ENCODE measurements at regions of chr6 and their contacts with region 1.

Region 1: DNA sequence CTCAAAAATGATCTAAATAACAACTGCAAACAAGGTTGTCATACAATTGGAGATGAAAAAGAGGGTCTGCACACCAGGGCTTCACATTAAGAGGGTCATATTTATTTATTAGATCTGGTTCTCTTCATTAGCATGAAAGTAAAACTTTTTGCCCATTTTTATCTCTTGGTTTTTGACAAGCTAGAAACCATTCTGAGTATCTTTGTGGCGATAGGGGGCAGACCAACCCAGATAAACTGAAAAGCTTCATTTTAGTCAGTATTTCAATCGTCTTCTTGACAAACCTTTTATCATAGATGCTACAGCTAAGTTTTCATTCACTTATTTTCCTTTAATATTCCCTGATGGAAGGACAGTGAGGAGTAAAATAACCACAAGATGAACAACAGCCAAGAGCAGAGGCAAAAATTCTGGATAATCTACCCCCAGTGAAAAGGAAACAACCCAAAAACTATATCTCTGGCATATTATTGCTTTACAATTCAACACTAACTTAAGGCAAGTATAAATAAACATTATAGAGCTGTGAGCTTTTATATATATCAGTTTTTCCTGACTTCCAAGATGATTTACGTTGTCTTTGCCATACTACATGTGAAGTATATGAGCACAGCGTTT is 45.2 kb downstream of the THEMIS start:
- DNase-seq: peak in 8 of 9 experiments; percentile 25 to 79 (median 62)
- ATAC-seq: peak; percentile 65
- H3K4me3 ChIP-seq: no peak overlapping the region
- H3K4me3 Mint-ChIP-seq: peak overlapping the region; percentile 19
- H3K27ac ChIP-seq: peak overlapping the region in 1 of 2 experiments; percentile 36
- H3K27ac Mint-ChIP-seq: peak overlapping the region; percentile 72
- H3K4me1 ChIP-seq: peaks cover 63% of the 10 kb centered on the region
- H3K4me1 Mint-ChIP-seq: peaks cover 83% of the 10 kb centered on the region
- H3K27me3 ChIP-seq: no peaks in the 10 kb centered on the region
- H3K27me3 Mint-ChIP-seq: no peaks in the 10 kb centered on the region
- CTCF ChIP-seq: peak; percentile 69

Region 2: DNA sequence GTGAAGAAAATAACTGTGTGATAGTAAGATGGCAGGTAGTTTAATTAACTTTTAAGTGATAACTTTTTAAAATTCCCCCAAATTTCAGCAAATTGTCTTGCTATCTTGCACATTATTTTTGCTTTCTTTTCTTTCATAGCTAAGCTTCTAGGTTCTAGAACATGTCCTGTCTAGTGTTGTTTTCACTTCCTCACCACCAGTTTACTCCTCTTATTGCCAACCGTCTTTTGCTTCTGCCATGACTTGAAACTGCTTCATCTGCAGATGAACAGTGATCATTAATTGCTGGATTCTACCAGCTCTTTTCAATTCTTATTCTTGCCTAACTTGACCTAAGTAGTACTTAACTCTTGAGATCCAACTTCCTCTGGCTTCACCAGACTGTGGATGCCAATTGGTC is 1378.0 kb before region 1 on chr6:
- CTCF ChIA-PET with region 1: no interaction called
- POLR2A ChIA-PET with region 1: no interaction called
- intact Hi-C with region 1: no loop called
- DNase-seq: no peak
- ATAC-seq: no peak
- H3K4me3 ChIP-seq: no peak overlapping the region
- H3K4me3 Mint-ChIP-seq: no peak overlapping the region
- H3K27ac ChIP-seq: no peak overlapping the region
- H3K27ac Mint-ChIP-seq: no peak overlapping the region
- H3K4me1 ChIP-seq: no peaks in the 10 kb centered on the region
- H3K4me1 Mint-ChIP-seq: no peaks in the 10 kb centered on the region
- H3K27me3 ChIP-seq: no peaks in the 10 kb centered on the region
- H3K27me3 Mint-ChIP-seq: no peaks in the 10 kb centered on the region
- CTCF ChIP-seq: no peak

Region 3: DNA sequence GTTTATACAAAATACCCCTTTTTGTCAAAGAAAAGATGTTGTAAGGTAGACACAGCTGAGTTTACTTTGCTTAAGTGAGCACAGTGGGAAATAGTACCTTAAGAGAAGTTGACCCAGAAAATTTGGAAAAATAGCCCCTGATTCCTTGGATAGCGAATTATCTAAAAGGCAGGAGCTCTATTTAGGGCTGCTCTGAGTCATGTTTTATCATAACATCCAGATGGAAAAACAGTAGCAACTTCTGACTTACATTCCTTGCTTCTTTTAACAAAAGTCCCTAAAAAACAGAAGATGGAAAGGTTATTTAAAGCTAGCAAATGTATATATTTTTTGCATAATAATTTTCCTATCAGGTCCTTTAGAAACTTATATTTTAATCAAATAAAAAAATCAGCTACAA is 13.8 kb before region 1 on chr6:
- CTCF ChIA-PET with region 1: interaction called, 19 read pairs
- POLR2A ChIA-PET with region 1: no interaction called
- intact Hi-C with region 1: loop called in 1 of 2 experiments (anchors 1 kb)
- DNase-seq: no peak
- ATAC-seq: no peak
- H3K4me3 ChIP-seq: no peak overlapping the region
- H3K4me3 Mint-ChIP-seq: no peak overlapping the region
- H3K27ac ChIP-seq: no peak overlapping the region
- H3K27ac Mint-ChIP-seq: peak overlapping the region; percentile 37
- H3K4me1 ChIP-seq: peaks cover 19% of the 10 kb centered on the region
- H3K4me1 Mint-ChIP-seq: peaks cover 73% of the 10 kb centered on the region
- H3K27me3 ChIP-seq: no peaks in the 10 kb centered on the region
- H3K27me3 Mint-ChIP-seq: no peaks in the 10 kb centered on the region
- CTCF ChIP-seq: no peak

Region 4: GRCh38 chr6:127907960-127908640 is 52.4 kb after region 1 on chr6:
- CTCF ChIA-PET with region 1: interaction called, 14 read pairs
- POLR2A ChIA-PET with region 1: no interaction called
- intact Hi-C with region 1: loop called in 1 of 2 experiments (anchors 2 kb)
- DNase-seq: peak in 2 of 9 experiments; percentile 48 to 66
- ATAC-seq: peak; percentile 69
- H3K4me3 ChIP-seq: peak overlapping the region; percentile 25 to 52
- H3K4me3 Mint-ChIP-seq: peak overlapping the region; percentile 80
- H3K27ac ChIP-seq: peak overlapping the region; percentile 42 to 88
- H3K27ac Mint-ChIP-seq: peak overlapping the region; percentile 88
- H3K4me1 ChIP-seq: peaks cover 24% of the 10 kb centered on the region
- H3K4me1 Mint-ChIP-seq: peaks cover 68% of the 10 kb centered on the region
- H3K27me3 ChIP-seq: no peaks in the 10 kb centered on the region
- H3K27me3 Mint-ChIP-seq: no peaks in the 10 kb centered on the region
- CTCF ChIP-seq: no peak

Region 5: DNA sequence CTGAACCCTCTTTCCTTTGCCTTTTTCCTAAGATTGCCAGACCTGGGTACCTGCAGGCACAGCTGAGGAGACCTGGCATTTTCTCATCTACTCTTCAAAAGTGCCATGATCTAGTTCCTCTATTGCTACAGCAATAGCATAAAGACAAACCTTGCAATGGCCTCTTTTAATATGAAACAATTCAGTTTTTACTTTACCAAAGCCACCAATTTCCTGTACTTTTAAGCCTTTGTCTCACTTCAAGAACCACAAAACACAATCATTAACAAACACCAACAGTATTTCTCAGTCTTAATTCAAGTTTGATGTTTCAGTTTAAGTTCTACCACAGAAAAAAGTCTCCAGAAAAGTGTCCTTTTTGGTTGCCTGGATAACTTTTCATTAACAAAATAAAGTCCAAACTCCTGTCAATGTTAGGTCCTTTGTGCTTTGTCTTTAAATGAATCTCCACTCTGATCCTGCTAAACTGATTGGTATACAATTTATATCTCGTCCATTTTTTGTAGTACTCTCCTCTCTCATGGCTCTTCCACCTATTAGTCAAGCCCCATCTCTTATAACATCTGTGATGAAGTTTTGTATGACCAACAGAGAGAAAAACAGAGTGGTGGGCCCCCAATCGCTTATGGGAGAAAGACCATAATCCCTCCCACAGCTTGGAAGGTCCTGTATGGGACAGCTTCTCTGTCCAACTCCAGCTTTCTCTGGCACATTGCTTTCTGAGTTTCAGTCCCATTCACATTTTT is 95.7 kb after region 1 on chr6:
- CTCF ChIA-PET with region 1: interaction called, 20 read pairs
- POLR2A ChIA-PET with region 1: no interaction called
- intact Hi-C with region 1: no loop called
- DNase-seq: peak in 2 of 9 experiments; percentile 55 to 76
- ATAC-seq: peak; percentile 83
- H3K4me3 ChIP-seq: peak overlapping the region; percentile 14 to 25
- H3K4me3 Mint-ChIP-seq: peak overlapping the region; percentile 68
- H3K27ac ChIP-seq: peak overlapping the region; percentile 40 to 63
- H3K27ac Mint-ChIP-seq: peak overlapping the region; percentile 92
- H3K4me1 ChIP-seq: peaks cover 58% of the 10 kb centered on the region
- H3K4me1 Mint-ChIP-seq: peaks cover 75% of the 10 kb centered on the region
- H3K27me3 ChIP-seq: no peaks in the 10 kb centered on the region
- H3K27me3 Mint-ChIP-seq: no peaks in the 10 kb centered on the region
- CTCF ChIP-seq: no peak

Region 6: GRCh38 chr6:128068116-128068479 is 212.4 kb after region 1 on chr6:
- CTCF ChIA-PET with region 1: interaction called, 5 read pairs
- POLR2A ChIA-PET with region 1: no interaction called
- intact Hi-C with region 1: loop called in 1 of 2 experiments (anchors 5 kb)
- DNase-seq: no peak
- ATAC-seq: no peak
- H3K4me3 ChIP-seq: no peak overlapping the region
- H3K4me3 Mint-ChIP-seq: no peak overlapping the region
- H3K27ac ChIP-seq: no peak overlapping the region
- H3K27ac Mint-ChIP-seq: no peak overlapping the region
- H3K4me1 ChIP-seq: no peaks in the 10 kb centered on the region
- H3K4me1 Mint-ChIP-seq: peaks cover 6% of the 10 kb centered on the region
- H3K27me3 ChIP-seq: no peaks in the 10 kb centered on the region
- H3K27me3 Mint-ChIP-seq: no peaks in the 10 kb centered on the region
- CTCF ChIP-seq: no peak

Region 7: DNA sequence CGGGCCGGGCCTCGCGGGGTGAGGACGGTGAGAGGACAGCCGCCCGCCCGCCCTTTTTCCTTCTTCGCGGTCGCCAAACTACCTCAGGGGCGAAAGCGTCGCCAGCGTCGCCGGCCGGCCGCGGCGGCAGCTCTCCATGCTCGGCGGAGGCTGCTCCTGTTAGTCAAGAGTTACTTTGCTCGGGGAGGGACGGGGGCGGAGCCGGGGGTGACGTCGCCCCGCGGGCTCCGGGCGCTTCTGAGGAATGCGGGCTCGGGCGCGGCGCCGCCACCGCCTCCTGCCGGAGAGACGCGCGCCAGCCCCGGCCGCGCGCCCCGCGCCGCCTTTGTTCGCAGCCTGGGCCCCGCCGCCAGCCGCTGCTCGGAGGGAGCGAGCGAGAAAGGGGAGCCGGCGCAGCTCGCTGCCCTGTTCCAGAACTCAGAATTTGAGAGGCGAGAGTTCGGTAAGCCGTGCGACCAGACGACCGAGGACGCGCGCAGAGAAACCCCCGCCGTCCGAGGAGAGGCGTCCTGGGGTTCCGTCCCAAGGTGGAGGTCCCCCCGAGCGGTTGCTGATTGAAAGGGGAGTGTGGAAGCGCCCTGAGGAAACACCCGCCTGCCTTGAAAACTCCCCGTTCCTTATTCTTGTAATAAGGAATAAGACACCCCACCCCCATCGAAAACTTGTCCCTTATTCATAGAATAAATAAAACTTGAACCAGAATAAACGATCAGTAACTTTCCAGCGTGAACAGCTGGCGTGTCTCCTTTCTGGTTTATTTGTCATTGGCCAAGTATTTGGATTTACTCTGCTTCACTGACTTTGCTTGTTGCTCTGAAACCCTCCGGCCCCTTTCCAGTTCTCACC is 665.0 kb after region 1 on chr6 and contains the start of gene PTPRK:
- CTCF ChIA-PET with region 1: interaction called, 7 read pairs
- POLR2A ChIA-PET with region 1: interaction called, 3 read pairs
- intact Hi-C with region 1: loop called (anchors 1 to 2 kb)
- DNase-seq: peak; percentile 69 to 92 (median 89)
- ATAC-seq: peak; percentile 85
- H3K4me3 ChIP-seq: peak within 1 kb of the TSS; percentile 66 to 92
- H3K4me3 Mint-ChIP-seq: peak within 1 kb of the TSS; percentile 97
- H3K27ac ChIP-seq: peak within 1 kb of the TSS; percentile 17 to 61
- H3K27ac Mint-ChIP-seq: peak within 1 kb of the TSS; percentile 94
- H3K4me1 ChIP-seq: peaks cover 4% of the 10 kb centered on the region
- H3K4me1 Mint-ChIP-seq: peaks cover 19% of the 10 kb centered on the region
- H3K27me3 ChIP-seq: peaks cover 5 to 18% of the 10 kb centered on the region in 2 experiments
- H3K27me3 Mint-ChIP-seq: peaks cover 41% of the 10 kb centered on the region
- CTCF ChIP-seq: peak; percentile 44
- total RNA-seq, gene PTPRK: 17.2 to 18.6 TPM

Region 8: DNA sequence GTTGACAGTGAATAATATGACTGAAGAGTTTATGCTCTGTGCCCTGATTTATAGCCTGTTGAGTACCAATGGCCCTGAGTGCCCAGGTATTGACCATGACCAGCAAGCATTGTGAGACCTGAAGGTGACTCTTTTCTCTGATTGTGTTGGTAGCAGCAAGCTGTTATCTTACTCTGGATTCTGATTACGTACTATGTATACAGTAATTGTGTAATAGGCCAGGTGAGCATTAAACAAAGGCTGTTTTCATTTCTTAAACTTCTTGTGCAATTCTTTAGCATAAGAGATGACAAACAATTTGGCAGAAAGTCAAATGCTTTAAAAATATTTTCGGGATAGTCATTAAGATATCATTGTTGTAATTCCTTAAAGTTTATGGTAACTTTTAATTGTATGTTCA is 776.5 kb after region 1 on chr6:
- CTCF ChIA-PET with region 1: no interaction called
- POLR2A ChIA-PET with region 1: no interaction called
- intact Hi-C with region 1: no loop called
- DNase-seq: no peak
- ATAC-seq: no peak
- H3K4me3 ChIP-seq: no peak overlapping the region
- H3K4me3 Mint-ChIP-seq: no peak overlapping the region
- H3K27ac ChIP-seq: no peak overlapping the region
- H3K27ac Mint-ChIP-seq: no peak overlapping the region
- H3K4me1 ChIP-seq: no peaks in the 10 kb centered on the region
- H3K4me1 Mint-ChIP-seq: no peaks in the 10 kb centered on the region
- H3K27me3 ChIP-seq: no peaks in the 10 kb centered on the region
- H3K27me3 Mint-ChIP-seq: peaks cover 2% of the 10 kb centered on the region
- CTCF ChIP-seq: no peak

Region 9: DNA sequence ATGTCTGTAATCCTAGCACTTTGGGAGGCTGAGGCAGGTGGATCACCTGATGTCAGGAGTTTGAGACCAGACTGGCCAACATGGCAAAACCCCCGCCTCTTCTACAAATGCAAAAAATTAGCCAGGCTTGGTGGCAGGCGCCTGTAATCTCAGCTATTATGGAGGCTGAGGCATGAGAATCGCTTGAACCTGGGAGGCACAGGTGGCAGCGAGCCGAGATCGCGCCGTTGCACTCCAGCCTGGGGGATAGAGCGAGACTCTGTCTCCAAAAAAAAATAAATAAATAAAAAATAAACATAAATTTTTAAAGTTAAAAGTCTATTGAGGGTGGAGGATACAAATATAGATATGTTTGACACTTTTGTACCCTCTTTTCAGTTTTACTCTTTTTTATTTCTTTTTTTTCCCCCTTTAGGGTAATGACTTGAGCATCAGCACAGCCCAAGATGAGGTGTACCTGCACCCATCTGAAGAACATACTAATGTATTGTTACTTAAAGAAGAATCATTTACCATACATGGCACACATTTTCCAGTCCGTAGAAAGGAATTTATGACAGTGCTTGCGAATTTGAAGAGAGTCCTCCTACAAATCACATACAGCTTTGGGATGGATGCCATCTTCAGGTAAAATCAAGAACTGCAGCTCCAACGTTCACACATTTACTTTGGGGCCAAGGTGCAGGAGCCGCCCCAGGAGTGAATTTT is 1396.2 kb after region 1 on chr6:
- CTCF ChIA-PET with region 1: no interaction called
- POLR2A ChIA-PET with region 1: no interaction called
- intact Hi-C with region 1: loop called in 1 of 2 experiments (anchors 5 kb)
- DNase-seq: peak in 5 of 9 experiments; percentile 2 to 70 (median 33)
- ATAC-seq: peak; percentile 48
- H3K4me3 ChIP-seq: no peak overlapping the region
- H3K4me3 Mint-ChIP-seq: no peak overlapping the region
- H3K27ac ChIP-seq: no peak overlapping the region
- H3K27ac Mint-ChIP-seq: no peak overlapping the region
- H3K4me1 ChIP-seq: no peaks in the 10 kb centered on the region
- H3K4me1 Mint-ChIP-seq: peaks cover 3% of the 10 kb centered on the region
- H3K27me3 ChIP-seq: peaks cover 0 to 7% of the 10 kb centered on the region in 2 experiments
- H3K27me3 Mint-ChIP-seq: peaks cover 17% of the 10 kb centered on the region
- CTCF ChIP-seq: peak; percentile 70

Measured in CD8-positive, alpha-beta T cell (primary cell).